ENCODE measurements at regions of chr9 and their contacts with region 1.

Region 1: DNA sequence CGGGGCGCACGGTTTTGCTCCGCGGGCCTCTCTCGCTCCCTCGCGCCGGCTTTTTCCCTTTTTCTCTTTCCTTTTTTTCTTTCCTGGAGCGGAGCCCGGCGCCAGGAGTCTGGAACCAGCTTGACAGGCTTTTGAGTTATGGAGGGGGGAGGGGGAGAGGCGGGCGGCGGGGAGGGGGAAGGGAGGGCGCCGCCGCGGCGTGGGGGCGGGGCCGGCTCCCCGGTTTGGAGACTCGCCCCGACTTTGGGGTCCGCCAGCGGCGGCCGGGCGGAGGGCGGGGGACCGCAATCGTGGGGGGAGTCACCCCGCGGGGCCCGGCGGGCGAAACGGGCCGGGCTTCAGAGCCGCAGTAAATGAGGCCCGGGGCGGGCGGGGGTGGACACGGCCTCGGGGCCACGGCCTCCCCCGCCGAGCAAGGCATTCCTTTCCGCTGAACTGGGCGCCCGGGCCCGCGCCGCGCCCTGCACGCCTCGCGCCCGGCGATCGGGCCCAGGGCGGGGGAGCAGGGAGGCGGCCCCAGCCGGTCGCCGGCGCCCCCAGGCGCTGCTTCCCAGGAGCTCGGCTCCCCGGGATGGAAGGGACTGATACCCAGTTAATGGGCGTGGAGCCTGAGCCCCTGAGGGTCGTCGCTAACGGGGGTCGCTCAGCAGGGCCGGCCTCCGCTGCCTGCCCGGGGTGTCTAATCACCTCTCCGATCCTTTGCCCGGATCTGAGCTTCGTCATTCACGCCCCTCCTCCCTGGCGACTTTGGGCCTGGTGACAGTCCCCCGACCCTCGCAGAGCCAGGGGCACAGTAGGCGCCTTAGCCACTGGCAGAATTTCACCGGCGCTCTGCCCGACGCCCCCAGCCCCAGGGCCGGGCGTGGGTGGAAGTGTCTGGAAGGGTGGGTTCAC is 138.1 kb downstream of the C9orf50 start:
- DNase-seq: peak; percentile 88 to 93 (median 88)
- ATAC-seq: peak in 3 of 4 donors; percentile 43 to 74 (median 74)
- H3K4me3 ChIP-seq: peak overlapping the region; percentile 41 to 77 (median 66)
- H3K27ac ChIP-seq: peak overlapping the region; percentile 97 to 100 (median 99)
- H3K4me1 ChIP-seq: peaks cover 11 to 84% (median 64%) of the 10 kb centered on the region in 12 donors
- H3K27me3 ChIP-seq: no peaks in the 10 kb centered on the region
- CTCF ChIP-seq: peak in 4 of 12 donors; percentile 11 to 33 (median 20)
- POLR2A ChIP-seq: peak in 1 of 2 donors; percentile 32

Region 2: GRCh38 chr9:129258124-129258822 is 224.5 kb before region 1 on chr9:
- intact Hi-C with region 1: loop called in 1 of 10 experiments (anchors 5 kb)
- DNase-seq: peak; percentile 93 to 97 (median 95)
- ATAC-seq: peak; percentile 66 to 87 (median 82)
- H3K4me3 ChIP-seq: peak overlapping the region in 9 of 12 donors; percentile 17 to 41 (median 33)
- H3K27ac ChIP-seq: peak overlapping the region in 6 of 12 donors; percentile 4 to 62 (median 20)
- H3K4me1 ChIP-seq: peaks cover 6 to 45% (median 28%) of the 10 kb centered on the region in 12 donors
- H3K27me3 ChIP-seq: peaks cover 0 to 16% (median 0%) of the 10 kb centered on the region in 9 donors
- CTCF ChIP-seq: no peak
- POLR2A ChIP-seq: no peak

Region 3: DNA sequence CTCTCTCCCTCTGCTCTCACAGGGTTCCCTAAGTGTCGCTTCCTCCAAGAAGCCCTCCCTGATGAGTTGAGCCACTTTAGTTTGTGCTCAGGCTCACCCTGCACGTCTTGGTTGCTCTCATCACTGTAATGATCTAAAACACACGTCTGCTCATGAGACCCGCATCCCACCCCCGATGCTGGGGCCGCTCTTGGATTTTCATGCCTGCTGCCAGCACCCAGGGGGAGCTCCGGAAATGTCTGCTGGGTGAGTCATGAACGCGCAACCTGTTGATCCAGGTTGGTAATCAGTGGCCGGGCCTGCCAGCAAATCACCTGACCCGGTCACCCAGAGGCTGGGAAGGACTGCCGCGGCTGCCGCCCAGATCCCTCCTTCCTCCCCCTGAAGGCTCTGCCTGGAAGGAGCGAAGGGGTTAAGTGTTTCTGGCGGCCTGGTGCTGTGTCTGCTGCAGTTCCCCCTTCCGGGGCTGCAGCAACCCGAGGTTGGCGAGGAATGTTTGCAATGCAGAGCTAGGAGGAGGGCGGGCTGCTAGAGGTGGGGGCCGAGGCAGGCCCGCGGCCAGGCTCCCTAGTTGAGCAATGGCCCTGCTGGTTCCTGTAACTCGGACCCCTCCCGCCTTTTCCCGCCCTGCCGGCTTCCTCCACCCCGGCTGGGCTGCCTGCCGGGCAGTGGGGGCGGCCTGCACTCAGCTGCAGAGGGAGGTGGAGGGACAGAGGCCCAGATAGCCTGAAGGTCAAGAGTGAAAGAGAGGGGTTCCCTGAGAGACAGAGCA is 148.6 kb before region 1 on chr9:
- intact Hi-C with region 1: loop called in 4 of 10 experiments (anchors 2 to 5 kb)
- DNase-seq: peak; percentile 92 to 95 (median 94)
- ATAC-seq: peak; percentile 85 to 94 (median 89)
- H3K4me3 ChIP-seq: peak overlapping the region in 9 of 12 donors; percentile 16 to 40 (median 25)
- H3K27ac ChIP-seq: peak overlapping the region; percentile 39 to 97 (median 88)
- H3K4me1 ChIP-seq: peaks cover 12 to 65% (median 43%) of the 10 kb centered on the region in 12 donors
- H3K27me3 ChIP-seq: no peaks in the 10 kb centered on the region
- CTCF ChIP-seq: no peak
- POLR2A ChIP-seq: peak in 1 of 2 donors; percentile 46

Region 4: GRCh38 chr9:129436751-129437625 is 45.8 kb before region 1 on chr9:
- intact Hi-C with region 1: loop called in 1 of 10 experiments (anchors 1 kb)
- DNase-seq: peak; percentile 67 to 86 (median 78)
- ATAC-seq: peak; percentile 45 to 88 (median 82)
- H3K4me3 ChIP-seq: peak overlapping the region; percentile 33 to 65 (median 54)
- H3K27ac ChIP-seq: peak overlapping the region; percentile 20 to 86 (median 72)
- H3K4me1 ChIP-seq: peaks cover 0 to 27% (median 14%) of the 10 kb centered on the region in 12 donors
- H3K27me3 ChIP-seq: peaks cover 0 to 27% (median 0%) of the 10 kb centered on the region in 9 donors
- CTCF ChIP-seq: no peak
- POLR2A ChIP-seq: no peak

Measured in heart left ventricle (tissue), 16 donors.